ENCODE measurements at regions of chr22 and their contacts with region 1.

Region 1: GRCh38 chr22:45284705-45285262 is at the start of gene UPK3A:
- DNase-seq: peak; percentile 57 to 81 (median 75)
- H3K4me3 ChIP-seq: peak within 1 kb of the TSS; percentile 29 to 76 (median 44)
- H3K4me3 Mint-ChIP-seq: peak within 1 kb of the TSS; percentile 69 to 88
- H3K27ac ChIP-seq: peak within 1 kb of the TSS; percentile 41 to 69
- H3K27ac Mint-ChIP-seq: peak within 1 kb of the TSS; percentile 62 to 93 (median 85)
- H3K4me1 ChIP-seq: peaks cover 70 to 80% of the 10 kb centered on the region in 2 donors
- H3K4me1 Mint-ChIP-seq: peaks cover 51% of the 10 kb centered on the region
- H3K27me3 ChIP-seq: no peaks in the 10 kb centered on the region
- H3K27me3 Mint-ChIP-seq: peaks cover 2 to 7% (median 4%) of the 10 kb centered on the region in 3 donors
- CTCF ChIP-seq: no peak
- polyA plus RNA-seq, gene UPK3A: 6.0 to 19.0 (median 14.0) TPM

Region 2: GRCh38 chr22:45268958-45269844 is 15.6 kb before region 1 on chr22:
- intact Hi-C with region 1: no loop called
- DNase-seq: peak; percentile 72 to 86 (median 80)
- H3K4me3 ChIP-seq: peak overlapping the region; percentile 65 to 93 (median 68)
- H3K4me3 Mint-ChIP-seq: peak overlapping the region; percentile 88 to 93
- H3K27ac ChIP-seq: peak overlapping the region; percentile 18 to 68
- H3K27ac Mint-ChIP-seq: peak overlapping the region; percentile 35 to 85 (median 56)
- H3K4me1 ChIP-seq: peaks cover 44 to 47% of the 10 kb centered on the region in 2 donors
- H3K4me1 Mint-ChIP-seq: peaks cover 42% of the 10 kb centered on the region
- H3K27me3 ChIP-seq: peaks cover 0 to 4% of the 10 kb centered on the region in 2 donors
- H3K27me3 Mint-ChIP-seq: peaks cover 13 to 23% (median 15%) of the 10 kb centered on the region in 3 donors
- CTCF ChIP-seq: peak; percentile 93

Region 3: DNA sequence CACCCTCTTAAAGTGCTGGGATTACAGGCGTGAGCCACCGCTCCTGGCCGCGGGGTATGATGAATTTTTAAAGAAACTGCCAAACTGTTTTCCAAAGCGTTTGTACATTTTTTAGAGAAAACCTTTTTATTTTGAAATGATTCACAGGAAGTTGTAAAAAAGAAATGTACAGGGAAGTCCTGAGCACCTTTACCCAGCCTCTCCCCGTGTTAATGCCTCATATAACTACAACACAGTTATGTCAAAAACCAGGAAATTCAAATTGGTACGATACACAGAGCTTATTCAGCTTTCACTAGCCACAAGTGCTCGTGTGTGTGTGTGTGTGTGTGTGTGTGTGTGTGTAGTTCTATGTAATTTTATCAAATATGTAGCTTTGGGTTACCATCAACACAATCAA is 18.0 kb after region 1 on chr22:
- intact Hi-C with region 1: loop called in 1 of 2 experiments (anchors 2 kb)
- DNase-seq: peak in 1 of 3 donors; percentile 30
- H3K4me3 ChIP-seq: no peak overlapping the region
- H3K4me3 Mint-ChIP-seq: no peak overlapping the region
- H3K27ac ChIP-seq: no peak overlapping the region
- H3K27ac Mint-ChIP-seq: peak overlapping the region; percentile 73 to 94 (median 87)
- H3K4me1 ChIP-seq: peaks cover 25 to 35% of the 10 kb centered on the region in 2 donors
- H3K4me1 Mint-ChIP-seq: peaks cover 38% of the 10 kb centered on the region
- H3K27me3 ChIP-seq: no peaks in the 10 kb centered on the region
- H3K27me3 Mint-ChIP-seq: peaks cover 0 to 6% (median 3%) of the 10 kb centered on the region in 3 donors
- CTCF ChIP-seq: no peak

Region 4: DNA sequence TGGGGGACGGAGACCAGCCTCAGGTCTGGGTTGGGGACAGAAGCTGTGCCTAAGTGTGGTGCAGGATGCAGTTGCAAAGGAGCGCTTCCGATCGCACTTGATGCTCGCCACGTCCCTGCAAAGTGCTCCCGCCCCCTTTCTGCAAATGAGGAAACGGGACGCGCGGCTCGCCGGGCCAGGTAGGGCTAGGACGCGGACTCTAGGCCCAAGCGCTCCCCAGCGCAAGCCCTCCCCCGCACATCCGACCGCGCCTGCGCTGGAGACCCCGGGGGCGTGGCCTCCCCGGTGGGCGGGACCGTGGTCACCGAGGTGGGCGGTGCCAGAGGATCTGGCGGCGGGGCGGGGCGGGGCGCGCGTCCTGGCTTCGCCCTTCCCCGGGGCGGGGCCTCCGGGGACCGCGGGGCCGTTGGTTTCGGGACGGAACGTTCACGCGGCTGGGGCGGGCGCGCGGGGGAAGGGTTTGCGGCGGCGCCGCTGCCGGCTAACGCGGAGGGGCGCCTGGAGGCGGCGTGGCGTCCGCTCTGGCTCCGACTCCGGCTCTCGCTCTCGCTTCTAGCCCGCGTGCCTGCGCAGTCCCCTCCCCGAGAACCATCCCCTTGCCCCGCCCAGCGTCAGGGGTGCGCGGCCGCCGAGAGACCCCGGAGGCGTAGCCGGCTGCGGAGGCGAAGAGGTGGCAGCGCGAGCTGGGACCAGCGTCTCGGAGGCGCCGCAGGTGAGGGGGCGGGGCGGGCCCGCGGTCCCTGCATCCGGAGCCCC is 24.9 kb after region 1 on chr22 and contains the start of gene FAM118A:
- intact Hi-C with region 1: loop called in 1 of 2 experiments (anchors 2 kb)
- DNase-seq: peak; percentile 87 to 89 (median 89)
- H3K4me3 ChIP-seq: peak within 1 kb of the TSS; percentile 85 to 88 (median 88)
- H3K4me3 Mint-ChIP-seq: peak within 1 kb of the TSS; percentile 88 to 91
- H3K27ac ChIP-seq: peak within 1 kb of the TSS; percentile 88 to 90
- H3K27ac Mint-ChIP-seq: peak within 1 kb of the TSS; percentile 88 to 96 (median 94)
- H3K4me1 ChIP-seq: peaks cover 35 to 40% of the 10 kb centered on the region in 2 donors
- H3K4me1 Mint-ChIP-seq: peaks cover 59% of the 10 kb centered on the region
- H3K27me3 ChIP-seq: no peaks in the 10 kb centered on the region
- H3K27me3 Mint-ChIP-seq: peaks cover 2 to 5% (median 4%) of the 10 kb centered on the region in 3 donors
- CTCF ChIP-seq: no peak
- polyA plus RNA-seq, gene FAM118A: 20.0 to 423 (median 27.9) TPM

Region 5: DNA sequence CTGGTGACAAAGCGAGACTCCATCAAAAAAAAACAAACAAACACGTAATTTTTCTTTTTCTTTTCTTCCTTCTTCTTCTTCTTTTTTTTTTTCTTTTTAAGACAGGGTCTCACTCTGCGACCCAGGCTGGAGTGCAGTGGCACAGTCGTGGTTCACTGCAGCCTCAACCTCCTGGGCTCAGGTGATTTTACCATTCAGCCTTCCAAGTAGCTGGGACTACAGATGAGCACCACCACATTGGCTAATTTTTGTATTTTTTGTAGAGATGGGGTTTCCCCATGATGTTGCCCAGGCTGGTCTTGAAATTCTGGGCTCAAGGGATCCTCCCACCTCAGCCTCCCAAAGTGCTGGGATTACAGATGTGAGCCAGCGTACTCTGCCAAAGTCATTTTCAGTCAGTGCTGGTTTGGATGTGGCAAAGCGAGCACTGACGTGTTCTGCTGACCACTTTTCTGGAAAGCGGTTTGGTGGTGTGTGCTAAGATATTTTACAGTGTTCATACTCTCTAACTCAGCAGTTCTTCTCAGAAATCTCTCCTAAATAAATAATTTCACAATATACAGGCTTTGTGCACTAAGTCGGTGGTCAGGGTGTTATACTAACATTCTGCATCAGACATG is 35.7 kb after region 1 on chr22:
- intact Hi-C with region 1: no loop called
- DNase-seq: no peak
- H3K4me3 ChIP-seq: no peak overlapping the region
- H3K4me3 Mint-ChIP-seq: no peak overlapping the region
- H3K27ac ChIP-seq: no peak overlapping the region
- H3K27ac Mint-ChIP-seq: peak overlapping the region in 3 of 7 donors; percentile 40 to 93 (median 92)
- H3K4me1 ChIP-seq: peaks cover 30 to 32% of the 10 kb centered on the region in 2 donors
- H3K4me1 Mint-ChIP-seq: peaks cover 36% of the 10 kb centered on the region
- H3K27me3 ChIP-seq: no peaks in the 10 kb centered on the region
- H3K27me3 Mint-ChIP-seq: no peaks in the 10 kb centered on the region
- CTCF ChIP-seq: no peak

Region 6: DNA sequence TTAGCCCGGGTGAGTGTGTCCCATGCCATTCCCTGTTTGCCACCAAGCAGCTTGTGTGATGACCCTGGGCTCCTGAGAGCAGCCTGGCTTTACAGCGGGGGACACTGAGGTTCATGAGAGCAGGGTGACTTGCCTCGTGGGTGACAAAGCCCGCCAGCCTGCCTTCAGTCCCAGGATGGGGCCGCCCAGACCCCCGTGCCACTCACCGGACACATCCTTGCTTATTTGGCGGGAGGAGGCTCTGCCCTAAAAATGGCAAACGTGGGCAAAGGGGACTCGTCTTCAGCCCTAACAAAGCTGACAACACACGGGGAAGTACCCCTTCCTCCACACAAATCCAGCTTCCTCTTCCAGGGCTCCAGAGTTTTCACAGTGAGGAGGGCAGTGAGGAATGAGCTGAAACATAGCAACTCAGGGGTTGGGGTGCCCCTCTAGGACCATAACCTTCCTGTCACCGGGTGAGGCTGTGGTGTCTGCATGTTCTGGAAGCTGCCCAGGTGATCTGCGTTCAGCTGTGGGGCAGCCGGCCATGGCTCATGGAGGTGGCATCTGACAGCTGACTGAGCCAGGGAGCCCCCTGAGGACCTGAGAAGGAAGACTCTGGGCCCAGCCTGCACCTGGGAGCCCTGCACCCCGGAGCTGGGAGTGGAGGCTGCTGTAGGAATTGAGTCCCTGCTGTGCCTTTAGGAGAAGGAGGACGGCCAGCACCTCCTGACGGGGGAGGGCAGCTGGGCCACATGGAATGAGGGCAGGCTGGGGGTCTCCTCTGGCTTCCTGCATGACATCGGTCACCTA is 145.4 kb after region 1 on chr22:
- intact Hi-C with region 1: no loop called
- DNase-seq: peak in 2 of 3 donors; percentile 18 to 50
- H3K4me3 ChIP-seq: no peak overlapping the region
- H3K4me3 Mint-ChIP-seq: no peak overlapping the region
- H3K27ac ChIP-seq: no peak overlapping the region
- H3K27ac Mint-ChIP-seq: peak overlapping the region in 1 of 7 donors; percentile 8
- H3K4me1 ChIP-seq: peaks cover 36 to 38% of the 10 kb centered on the region in 2 donors
- H3K4me1 Mint-ChIP-seq: peaks cover 41% of the 10 kb centered on the region
- H3K27me3 ChIP-seq: no peaks in the 10 kb centered on the region
- H3K27me3 Mint-ChIP-seq: peaks cover 0 to 3% (median 2%) of the 10 kb centered on the region in 3 donors
- CTCF ChIP-seq: no peak